ENCODE measurements at regions of chr12 and their contacts with region 1.

Region 1: DNA sequence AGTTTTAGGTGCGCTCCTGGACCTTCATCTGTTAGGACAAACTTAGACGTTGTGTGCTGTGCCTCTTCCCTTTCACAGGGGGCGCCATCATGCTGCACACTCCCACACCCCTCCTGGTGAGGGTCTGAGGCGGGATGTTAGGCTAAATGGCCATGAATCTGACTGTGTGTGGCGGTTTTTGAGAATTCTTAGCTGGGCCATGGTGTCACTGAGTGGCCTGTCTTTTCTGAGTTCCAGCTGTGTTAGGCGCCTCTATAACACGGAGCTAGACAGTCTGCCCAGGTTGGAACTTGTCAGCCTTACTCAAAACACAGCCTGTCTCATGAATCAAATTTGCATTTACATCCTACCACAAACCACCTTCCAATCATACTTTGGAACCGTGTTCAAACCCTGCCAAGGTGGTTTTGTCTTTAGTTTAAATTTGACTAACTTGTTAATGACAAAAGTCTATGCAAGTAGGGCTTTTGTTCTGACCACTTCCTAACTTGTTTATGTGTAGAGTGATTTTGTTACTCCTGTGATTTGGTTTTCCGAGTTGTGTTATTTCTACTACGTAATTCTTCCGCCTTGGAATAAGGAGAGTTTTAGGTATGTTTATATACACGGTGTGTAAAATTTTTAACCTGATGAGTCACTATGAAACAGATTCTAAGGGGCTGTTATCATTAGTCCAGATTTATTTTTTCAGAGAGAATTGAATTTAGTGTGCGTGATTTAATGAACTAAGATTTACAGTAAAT is 19.6 kb downstream of the ACVR1B start:
- DNase-seq: peak in 7 of 9 experiments; percentile 13 to 75 (median 44)
- ATAC-seq: peak; percentile 72
- H3K4me3 ChIP-seq: no peak overlapping the region
- H3K4me3 Mint-ChIP-seq: peak overlapping the region; percentile 52
- H3K27ac ChIP-seq: peak overlapping the region in 1 of 2 experiments; percentile 6
- H3K27ac Mint-ChIP-seq: peak overlapping the region; percentile 72
- H3K4me1 ChIP-seq: peaks cover 61% of the 10 kb centered on the region
- H3K4me1 Mint-ChIP-seq: peaks cover 62% of the 10 kb centered on the region
- H3K27me3 ChIP-seq: no peaks in the 10 kb centered on the region
- H3K27me3 Mint-ChIP-seq: no peaks in the 10 kb centered on the region
- CTCF ChIP-seq: peak; percentile 54

Region 2: DNA sequence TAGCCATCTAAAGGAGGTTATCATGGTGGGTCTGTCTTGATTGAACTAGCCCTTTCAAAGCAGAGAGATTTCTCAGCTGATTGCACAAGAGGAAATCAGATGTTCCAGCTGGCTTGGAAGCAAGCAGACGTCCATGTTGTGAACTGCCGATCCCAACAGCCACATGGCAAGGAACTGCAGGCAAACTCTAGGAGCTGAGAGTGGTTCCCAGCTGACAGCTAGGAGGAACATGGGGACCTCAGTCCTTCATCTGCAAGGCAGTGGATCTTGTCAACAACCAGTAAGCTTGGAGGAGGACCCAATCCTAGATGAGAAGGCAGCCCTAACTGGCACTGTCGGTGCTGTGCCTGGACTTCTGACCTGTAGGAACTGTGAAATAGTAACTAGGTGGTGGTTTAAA is 11.9 kb before region 1 on chr12:
- CTCF ChIA-PET with region 1: interaction called, 22 read pairs
- POLR2A ChIA-PET with region 1: no interaction called
- intact Hi-C with region 1: no loop called
- DNase-seq: no peak
- ATAC-seq: no peak
- H3K4me3 ChIP-seq: no peak overlapping the region
- H3K4me3 Mint-ChIP-seq: no peak overlapping the region
- H3K27ac ChIP-seq: no peak overlapping the region
- H3K27ac Mint-ChIP-seq: no peak overlapping the region
- H3K4me1 ChIP-seq: peaks cover 27% of the 10 kb centered on the region
- H3K4me1 Mint-ChIP-seq: peaks cover 57% of the 10 kb centered on the region
- H3K27me3 ChIP-seq: no peaks in the 10 kb centered on the region
- H3K27me3 Mint-ChIP-seq: no peaks in the 10 kb centered on the region
- CTCF ChIP-seq: no peak

Region 3: DNA sequence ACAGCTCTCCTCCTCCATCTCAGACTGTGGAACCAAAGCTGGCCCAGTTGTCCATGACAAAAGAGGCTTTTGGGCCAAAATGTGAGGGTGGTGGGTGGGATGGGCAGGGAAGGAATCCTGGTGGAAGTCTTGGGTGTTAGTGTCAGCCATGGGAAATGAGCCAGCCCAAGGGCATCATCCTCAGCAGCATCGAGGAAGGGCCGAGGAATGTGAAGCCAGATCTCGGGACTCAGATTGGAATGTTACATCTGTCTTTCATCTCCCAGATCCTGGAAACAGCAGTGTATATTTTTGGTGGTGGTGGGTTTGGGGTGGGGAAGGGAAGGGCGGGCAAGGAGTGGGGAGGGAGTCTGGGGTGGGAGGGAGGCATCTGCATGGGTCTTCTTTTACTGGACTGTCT is 23.9 kb after region 1 on chr12:
- CTCF ChIA-PET with region 1: interaction called, 20 read pairs
- POLR2A ChIA-PET with region 1: no interaction called
- intact Hi-C with region 1: no loop called
- DNase-seq: no peak
- ATAC-seq: no peak
- H3K4me3 ChIP-seq: no peak overlapping the region
- H3K4me3 Mint-ChIP-seq: no peak overlapping the region
- H3K27ac ChIP-seq: no peak overlapping the region
- H3K27ac Mint-ChIP-seq: no peak overlapping the region
- H3K4me1 ChIP-seq: no peaks in the 10 kb centered on the region
- H3K4me1 Mint-ChIP-seq: peaks cover 5% of the 10 kb centered on the region
- H3K27me3 ChIP-seq: no peaks in the 10 kb centered on the region
- H3K27me3 Mint-ChIP-seq: no peaks in the 10 kb centered on the region
- CTCF ChIP-seq: no peak